Caco-2 (cell line): ENCODE measurements at regions of chr13 and their contacts with region 1.

Region 1: DNA sequence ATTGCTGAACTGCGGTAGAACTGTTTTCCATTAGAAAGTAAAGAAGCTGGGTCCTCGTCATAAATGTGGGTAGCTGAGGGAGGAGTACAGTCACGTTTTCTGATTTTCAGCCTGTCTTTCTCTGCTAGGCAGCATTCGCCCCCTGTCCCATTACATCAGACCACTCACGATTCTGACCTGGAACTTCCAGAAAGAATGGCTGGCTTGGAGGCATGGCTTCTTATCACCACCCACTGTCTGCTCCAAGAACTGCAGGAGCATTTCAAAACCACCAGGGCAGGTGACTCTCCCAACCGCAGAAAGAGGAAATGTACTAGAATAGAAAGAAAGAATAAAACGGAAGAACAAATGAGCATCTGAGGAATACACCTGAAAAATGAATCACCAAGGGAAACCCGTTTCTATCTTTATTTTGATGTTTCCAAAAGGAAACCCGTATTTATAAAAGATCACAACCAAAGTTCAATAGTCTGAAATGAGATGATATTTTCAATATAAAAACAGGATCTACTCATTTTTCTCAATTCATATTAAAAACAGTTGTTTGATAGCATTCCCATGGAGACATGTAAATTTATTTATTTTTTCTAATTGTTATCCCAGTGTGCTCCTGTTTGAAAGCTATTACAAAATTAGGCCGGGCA is 22.1 kb upstream of the POMP start:
- DNase-seq: peak; percentile 70 to 79
- H3K4me3 ChIP-seq: no peak overlapping the region
- H3K4me3 Mint-ChIP-seq: peak overlapping the region; percentile 27
- H3K27ac Mint-ChIP-seq: peak overlapping the region; percentile 69
- H3K4me1 ChIP-seq: 0 out of 2 replicates have a peak, but pooled peaks cover 12% of the 10 kb centered on the region
- H3K4me1 Mint-ChIP-seq: peaks cover 8% of the 10 kb centered on the region
- H3K27me3 ChIP-seq: no peaks in the 10 kb centered on the region
- H3K27me3 Mint-ChIP-seq: no peaks in the 10 kb centered on the region
- CTCF ChIP-seq: peak; percentile 89 to 96

Region 2: GRCh38 chr13:27857282-27857681 is 779.5 kb before region 1 on chr13:
- CTCF ChIA-PET with region 1: no interaction called
- POLR2A ChIA-PET with region 1: no interaction called
- intact Hi-C with region 1: no loop called
- DNase-seq: no peak
- H3K4me3 ChIP-seq: no peak overlapping the region
- H3K4me3 Mint-ChIP-seq: no peak overlapping the region
- H3K27ac Mint-ChIP-seq: no peak overlapping the region
- H3K4me1 ChIP-seq: peaks cover 34% of the 10 kb centered on the region
- H3K4me1 Mint-ChIP-seq: peaks cover 21% of the 10 kb centered on the region
- H3K27me3 ChIP-seq: no peaks in the 10 kb centered on the region
- H3K27me3 Mint-ChIP-seq: no peaks in the 10 kb centered on the region
- CTCF ChIP-seq: no peak

Region 3: GRCh38 chr13:28324181-28324789 is 312.5 kb before region 1 on chr13:
- CTCF ChIA-PET with region 1: no interaction called
- POLR2A ChIA-PET with region 1: no interaction called
- intact Hi-C with region 1: loop called (anchors 1 kb)
- DNase-seq: peak; percentile 75 to 81
- H3K4me3 ChIP-seq: no peak overlapping the region
- H3K4me3 Mint-ChIP-seq: no peak overlapping the region
- H3K27ac Mint-ChIP-seq: no peak overlapping the region
- H3K4me1 ChIP-seq: peaks cover 8% of the 10 kb centered on the region; the same call in 1 of the 2 replicates
- H3K4me1 Mint-ChIP-seq: peaks cover 14% of the 10 kb centered on the region
- H3K27me3 ChIP-seq: no peaks in the 10 kb centered on the region
- H3K27me3 Mint-ChIP-seq: no peaks in the 10 kb centered on the region
- CTCF ChIP-seq: peak; percentile 90

Region 4: GRCh38 chr13:28376604-28377003 is 260.2 kb before region 1 on chr13:
- CTCF ChIA-PET with region 1: no interaction called
- POLR2A ChIA-PET with region 1: no interaction called
- intact Hi-C with region 1: loop called (anchors 2 kb)
- DNase-seq: no peak
- H3K4me3 ChIP-seq: no peak overlapping the region
- H3K4me3 Mint-ChIP-seq: no peak overlapping the region
- H3K27ac Mint-ChIP-seq: no peak overlapping the region
- H3K4me1 ChIP-seq: no peaks in the 10 kb centered on the region
- H3K4me1 Mint-ChIP-seq: peaks cover 5% of the 10 kb centered on the region
- H3K27me3 ChIP-seq: no peaks in the 10 kb centered on the region
- H3K27me3 Mint-ChIP-seq: peaks cover 2% of the 10 kb centered on the region
- CTCF ChIP-seq: peak; percentile 22 to 26

Region 5: GRCh38 chr13:28483313-28483930 is 153.4 kb before region 1 on chr13:
- CTCF ChIA-PET with region 1: no interaction called
- POLR2A ChIA-PET with region 1: no interaction called
- intact Hi-C with region 1: loop called (anchors 2 kb)
- DNase-seq: no peak
- H3K4me3 ChIP-seq: no peak overlapping the region
- H3K4me3 Mint-ChIP-seq: no peak overlapping the region
- H3K27ac Mint-ChIP-seq: no peak overlapping the region
- H3K4me1 ChIP-seq: no peaks in the 10 kb centered on the region
- H3K4me1 Mint-ChIP-seq: no peaks in the 10 kb centered on the region
- H3K27me3 ChIP-seq: no peaks in the 10 kb centered on the region
- H3K27me3 Mint-ChIP-seq: no peaks in the 10 kb centered on the region
- CTCF ChIP-seq: no peak

Region 6: GRCh38 chr13:28530729-28531076 is 106.1 kb before region 1 on chr13:
- CTCF ChIA-PET with region 1: no interaction called
- POLR2A ChIA-PET with region 1: no interaction called
- intact Hi-C with region 1: loop called (anchors 1 kb)
- DNase-seq: no peak
- H3K4me3 ChIP-seq: peak overlapping the region; percentile 28
- H3K4me3 Mint-ChIP-seq: no peak overlapping the region
- H3K27ac Mint-ChIP-seq: no peak overlapping the region
- H3K4me1 ChIP-seq: no peaks in the 10 kb centered on the region
- H3K4me1 Mint-ChIP-seq: no peaks in the 10 kb centered on the region
- H3K27me3 ChIP-seq: no peaks in the 10 kb centered on the region
- H3K27me3 Mint-ChIP-seq: no peaks in the 10 kb centered on the region
- CTCF ChIP-seq: no peak

Region 7: DNA sequence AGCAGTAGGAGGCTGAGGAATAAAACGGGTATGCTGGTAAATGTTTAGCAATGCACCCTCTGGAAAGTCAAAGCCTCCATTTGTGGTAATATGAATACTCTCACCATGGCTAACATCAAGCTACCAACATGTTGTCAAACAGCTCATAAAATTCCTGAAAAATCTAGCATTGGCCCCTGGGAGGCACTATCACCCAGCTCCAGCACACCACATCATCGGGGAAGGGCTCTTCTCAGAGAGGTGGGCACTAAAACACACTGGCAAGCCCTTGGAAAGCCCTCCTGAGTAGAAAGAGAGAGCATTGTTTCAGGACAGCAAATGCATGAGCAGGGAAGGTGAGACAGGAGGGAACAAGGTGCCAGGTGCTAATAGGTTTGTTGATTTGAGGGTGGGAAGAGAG is 87.9 kb before region 1 on chr13:
- CTCF ChIA-PET with region 1: no interaction called
- POLR2A ChIA-PET with region 1: no interaction called
- intact Hi-C with region 1: loop called (anchors 1 kb)
- DNase-seq: no peak
- H3K4me3 ChIP-seq: no peak overlapping the region
- H3K4me3 Mint-ChIP-seq: no peak overlapping the region
- H3K27ac Mint-ChIP-seq: no peak overlapping the region
- H3K4me1 ChIP-seq: peaks cover 24% of the 10 kb centered on the region
- H3K4me1 Mint-ChIP-seq: peaks cover 62% of the 10 kb centered on the region
- H3K27me3 ChIP-seq: no peaks in the 10 kb centered on the region
- H3K27me3 Mint-ChIP-seq: no peaks in the 10 kb centered on the region
- CTCF ChIP-seq: no peak

Region 8: DNA sequence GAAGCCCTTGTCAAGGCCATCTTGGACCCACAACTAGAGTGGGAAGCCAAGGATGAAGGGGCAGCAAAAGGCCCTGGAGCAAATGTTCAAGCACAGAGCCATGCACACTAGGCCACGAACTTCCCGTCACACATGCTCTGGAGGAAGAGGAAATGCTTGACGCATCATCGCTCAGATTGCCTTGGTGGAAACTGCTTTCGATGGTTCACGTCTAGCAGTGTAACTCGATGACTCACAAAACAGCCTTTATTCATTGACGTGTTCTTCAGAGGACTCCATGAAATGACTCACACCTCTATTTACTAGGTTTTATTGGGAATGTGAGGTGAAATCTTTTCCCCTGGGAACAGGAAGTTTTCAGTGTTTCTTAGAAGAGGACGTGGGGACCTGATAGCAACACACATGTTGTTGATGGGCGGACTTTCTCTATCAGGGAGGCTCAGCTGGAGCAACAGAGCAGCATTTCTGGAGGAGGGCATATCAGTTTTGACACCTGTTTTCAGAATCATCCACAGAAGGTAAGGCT is 62.1 kb before region 1 on chr13:
- CTCF ChIA-PET with region 1: no interaction called
- POLR2A ChIA-PET with region 1: no interaction called
- intact Hi-C with region 1: loop called (anchors 5 kb)
- DNase-seq: no peak
- H3K4me3 ChIP-seq: no peak overlapping the region
- H3K4me3 Mint-ChIP-seq: no peak overlapping the region
- H3K27ac Mint-ChIP-seq: no peak overlapping the region
- H3K4me1 ChIP-seq: peaks cover 17% of the 10 kb centered on the region; the same call in 1 of the 2 replicates
- H3K4me1 Mint-ChIP-seq: peaks cover 20% of the 10 kb centered on the region
- H3K27me3 ChIP-seq: no peaks in the 10 kb centered on the region
- H3K27me3 Mint-ChIP-seq: no peaks in the 10 kb centered on the region
- CTCF ChIP-seq: no peak

Region 9: DNA sequence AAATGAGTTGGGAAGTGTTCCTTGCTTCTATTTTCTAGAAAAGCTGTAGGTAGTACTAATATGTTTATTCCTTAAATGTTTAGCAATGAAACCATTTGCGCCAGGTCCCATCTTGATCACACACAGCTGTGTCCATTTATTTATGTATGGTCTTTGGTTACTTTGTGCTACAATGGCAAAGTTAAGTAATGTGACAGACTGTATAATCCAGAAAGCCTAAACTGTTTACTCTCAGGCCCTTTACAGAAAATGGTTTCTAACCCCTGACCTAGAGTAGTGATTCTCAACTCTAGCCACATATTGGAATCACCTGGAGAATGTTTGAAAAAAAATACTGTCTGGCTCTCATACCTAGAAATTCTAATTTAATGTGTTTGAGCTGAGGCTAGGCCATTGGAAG is 60.6 kb after region 1 on chr13:
- CTCF ChIA-PET with region 1: no interaction called
- POLR2A ChIA-PET with region 1: no interaction called
- intact Hi-C with region 1: no loop called
- DNase-seq: no peak
- H3K4me3 ChIP-seq: no peak overlapping the region
- H3K4me3 Mint-ChIP-seq: no peak overlapping the region
- H3K27ac Mint-ChIP-seq: no peak overlapping the region
- H3K4me1 ChIP-seq: peaks cover 11% of the 10 kb centered on the region
- H3K4me1 Mint-ChIP-seq: no peaks in the 10 kb centered on the region
- H3K27me3 ChIP-seq: no peaks in the 10 kb centered on the region
- H3K27me3 Mint-ChIP-seq: no peaks in the 10 kb centered on the region
- CTCF ChIP-seq: no peak